ENCODE measurements at regions of chr14 and their contacts with region 1.

Region 1: DNA sequence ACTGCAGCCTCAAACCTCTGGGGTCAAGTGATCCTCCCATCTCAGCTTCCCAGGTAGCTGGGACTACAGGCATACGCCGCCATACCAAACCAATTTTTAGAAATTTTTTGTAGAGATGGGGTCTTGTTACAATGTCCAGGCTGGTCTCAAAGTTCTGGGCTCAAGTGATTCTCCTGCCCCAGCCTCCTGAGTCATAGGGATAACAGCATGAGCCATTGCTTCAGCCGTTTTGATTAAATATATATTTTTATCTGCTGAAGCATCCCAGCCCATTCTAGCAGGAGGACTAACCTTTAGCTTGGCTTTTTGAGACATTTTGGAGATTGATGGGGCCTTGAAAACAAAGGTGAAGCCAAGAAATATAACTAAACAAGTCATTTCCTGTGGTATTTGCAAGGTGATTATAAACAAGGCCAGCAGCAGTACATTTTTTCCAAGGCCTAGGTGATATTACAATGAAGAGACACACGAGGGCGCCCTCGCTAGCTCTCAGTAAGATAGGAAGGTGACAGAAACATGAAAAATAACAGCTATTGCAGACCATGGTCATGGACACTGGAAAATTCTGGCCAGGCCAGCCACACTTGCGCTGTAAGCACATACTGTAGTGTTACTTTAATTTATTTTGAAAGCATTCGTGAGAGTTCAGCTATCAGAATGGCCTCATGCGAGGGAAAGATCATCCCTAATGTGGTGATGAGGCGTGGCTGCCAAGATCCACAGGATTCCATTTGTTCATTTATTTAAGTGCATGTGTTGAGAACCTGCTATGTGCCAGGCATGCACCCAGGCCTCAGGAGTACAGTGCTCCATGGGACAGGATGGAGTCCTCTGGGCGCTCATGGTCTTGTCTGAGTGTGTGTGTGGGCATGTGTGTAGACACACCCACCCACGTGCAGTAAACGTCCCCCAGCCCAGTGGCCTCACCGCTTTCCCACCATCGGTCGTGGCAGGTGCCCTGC is 63.5 kb downstream of the DGLUCY start:
- DNase-seq: no peak
- H3K4me3 ChIP-seq: no peak overlapping the region
- H3K27ac ChIP-seq: peak overlapping the region; percentile 1 to 56 (median 28)
- H3K4me1 ChIP-seq: peaks cover 10 to 22% (median 18%) of the 10 kb centered on the region in 4 donors
- H3K27me3 ChIP-seq: no peaks in the 10 kb centered on the region
- CTCF ChIP-seq: peak; percentile 57 to 82 (median 76)
- EP300 ChIP-seq: no peak
- POLR2A ChIP-seq: no peak

Region 2: GRCh38 chr14:90805662-90806540 is 371.5 kb before region 1 on chr14:
- intact Hi-C with region 1: no loop called
- DNase-seq: no peak
- H3K4me3 ChIP-seq: no peak overlapping the region
- H3K27ac ChIP-seq: peak overlapping the region in 1 of 4 donors; percentile 68
- H3K4me1 ChIP-seq: peaks cover 53 to 73% (median 63%) of the 10 kb centered on the region in 4 donors
- H3K27me3 ChIP-seq: no peaks in the 10 kb centered on the region
- CTCF ChIP-seq: no peak
- EP300 ChIP-seq: no peak
- POLR2A ChIP-seq: no peak

Region 3: GRCh38 chr14:90903101-90903500 is 274.3 kb before region 1 on chr14:
- intact Hi-C with region 1: loop called (anchors 1 kb)
- DNase-seq: no peak
- H3K4me3 ChIP-seq: no peak overlapping the region
- H3K27ac ChIP-seq: peak overlapping the region in 2 of 4 donors; percentile 37 to 53
- H3K4me1 ChIP-seq: peaks cover 0 to 8% (median 3%) of the 10 kb centered on the region in 4 donors
- H3K27me3 ChIP-seq: no peaks in the 10 kb centered on the region
- CTCF ChIP-seq: peak; percentile 67 to 84 (median 70)
- EP300 ChIP-seq: no peak
- POLR2A ChIP-seq: no peak

Region 4: DNA sequence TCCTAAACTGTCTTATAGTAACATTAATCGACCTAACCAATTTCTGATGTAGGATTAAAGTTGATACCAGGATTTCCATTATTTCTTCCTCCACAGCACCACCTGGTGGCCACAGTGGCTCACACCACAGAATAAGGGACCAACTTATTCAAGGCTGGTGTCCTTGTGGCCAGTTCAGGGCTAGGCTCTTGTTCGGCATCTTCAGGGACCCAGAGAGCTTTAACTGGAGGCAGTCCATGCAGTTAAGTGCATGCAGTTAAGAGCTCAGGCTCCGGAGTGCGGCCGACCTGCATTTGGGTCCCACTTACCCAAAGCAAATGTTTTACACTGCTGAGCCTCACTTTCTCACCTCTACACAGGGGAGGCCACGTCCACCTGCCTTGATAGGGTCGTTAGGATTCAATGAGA is 109.2 kb after region 1 on chr14:
- intact Hi-C with region 1: loop called (anchors 2 kb)
- DNase-seq: no peak
- H3K4me3 ChIP-seq: no peak overlapping the region
- H3K27ac ChIP-seq: no peak overlapping the region
- H3K4me1 ChIP-seq: peaks cover 5 to 23% (median 12%) of the 10 kb centered on the region in 4 donors
- H3K27me3 ChIP-seq: no peaks in the 10 kb centered on the region
- CTCF ChIP-seq: peak; percentile 81 to 88 (median 83)
- EP300 ChIP-seq: no peak
- POLR2A ChIP-seq: no peak

Measured in esophagus muscularis mucosa (tissue), 4 donors.